ENCODE measurements at regions of chr19 and their contacts with region 1.

Region 1: DNA sequence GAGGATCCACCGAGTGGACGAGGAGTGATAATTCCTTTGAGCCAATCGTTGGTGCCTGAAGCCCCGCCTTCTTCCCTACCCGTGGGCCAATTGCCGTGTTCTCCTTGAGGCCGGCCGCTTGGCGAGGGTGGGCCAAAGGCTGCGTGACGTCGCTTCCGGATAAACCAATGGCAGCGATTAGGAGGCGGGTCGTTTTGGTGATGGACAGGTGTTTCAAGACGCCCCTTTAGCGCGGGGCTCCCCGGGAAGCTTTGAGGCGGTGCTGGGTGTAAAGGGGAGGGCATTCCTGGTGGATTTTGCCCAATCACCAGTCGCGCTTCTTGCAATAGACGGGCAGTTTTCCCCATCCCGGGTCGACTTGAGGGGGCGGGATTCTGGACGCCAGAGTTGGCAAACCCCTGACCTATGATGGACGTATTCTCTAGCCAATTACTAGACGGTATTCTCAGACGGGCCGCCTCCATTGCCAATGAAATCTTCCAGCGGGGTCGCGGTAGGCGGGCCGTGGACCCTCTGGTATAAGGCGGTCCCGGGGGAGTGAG is 310 bp upstream of the PRMT1 start:
- DNase-seq: peak; percentile 93
- ATAC-seq: peak; percentile 67
- H3K4me3 Mint-ChIP-seq: peak overlapping the region; percentile 99
- H3K27ac Mint-ChIP-seq: peak overlapping the region; percentile 99
- H3K4me1 Mint-ChIP-seq: peaks cover 70% of the 10 kb centered on the region
- H3K27me3 Mint-ChIP-seq: no peaks in the 10 kb centered on the region
- CTCF ChIP-seq: no peak

Region 2: DNA sequence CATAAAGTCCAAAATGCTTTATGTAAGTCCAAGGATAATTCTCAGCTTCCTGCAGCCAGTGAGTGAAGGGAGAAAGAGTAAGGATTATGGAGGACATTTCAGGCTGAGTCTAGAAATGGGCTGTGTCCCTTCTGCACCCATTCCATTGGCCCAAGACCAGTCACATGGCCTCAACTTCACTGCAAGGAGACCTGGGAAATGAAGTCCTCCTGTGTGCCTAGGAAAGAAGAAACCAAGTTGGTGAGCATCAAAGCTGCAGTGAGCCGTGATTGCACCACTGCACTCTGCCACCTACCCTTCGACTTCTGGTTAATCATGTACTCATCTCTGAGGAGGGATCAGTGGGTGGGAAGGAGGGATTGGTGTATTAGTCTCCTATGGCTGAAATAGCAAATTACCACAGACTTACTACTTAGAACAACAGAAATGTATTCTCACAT is 345.1 kb before region 1 on chr19:
- CTCF ChIA-PET with region 1: no interaction called
- POLR2A ChIA-PET with region 1: no interaction called
- intact Hi-C with region 1: loop called (anchors 5 kb)
- DNase-seq: no peak
- ATAC-seq: peak; percentile 44
- H3K4me3 Mint-ChIP-seq: peak overlapping the region; percentile 73
- H3K27ac Mint-ChIP-seq: peak overlapping the region; percentile 100
- H3K4me1 Mint-ChIP-seq: peaks cover 95% of the 10 kb centered on the region
- H3K27me3 Mint-ChIP-seq: no peaks in the 10 kb centered on the region
- CTCF ChIP-seq: no peak

Region 3: DNA sequence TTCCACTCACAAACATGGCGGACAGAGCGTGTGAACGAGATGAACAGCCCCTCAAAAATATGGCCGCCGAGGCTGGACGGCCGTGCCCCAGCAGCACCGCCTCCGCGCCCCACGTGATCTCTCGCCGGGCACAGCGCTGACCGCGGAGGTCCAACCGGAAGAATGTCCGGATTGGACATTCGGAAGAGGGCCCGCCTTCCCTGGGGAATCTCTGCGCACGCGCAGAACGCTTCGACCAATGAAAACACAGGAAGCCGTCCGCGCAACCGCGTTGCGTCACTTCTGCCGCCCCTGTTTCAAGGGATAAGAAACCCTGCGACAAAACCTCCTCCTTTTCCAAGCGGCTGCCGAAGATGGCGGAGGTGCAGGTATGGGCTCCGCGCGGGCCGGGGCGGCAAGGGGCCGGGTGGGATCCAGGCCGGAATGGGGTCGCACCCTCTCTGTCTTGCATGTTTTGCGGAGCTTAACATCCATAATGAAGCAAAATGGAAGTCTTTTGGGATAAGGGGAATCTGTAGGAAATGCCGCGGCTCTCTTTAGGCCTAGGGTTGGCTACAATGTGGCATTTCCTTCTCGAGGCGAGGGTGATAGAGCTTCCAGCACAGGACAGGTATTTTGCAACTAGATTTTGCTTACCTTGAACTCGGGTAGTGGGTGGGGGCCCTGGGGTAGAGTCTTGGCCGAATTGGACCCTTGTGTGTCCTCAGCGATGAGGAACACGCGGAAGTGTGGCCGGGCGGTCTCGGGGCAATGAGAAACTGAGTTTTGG is 189.3 kb before region 1 on chr19 and contains the start of gene RPL13A:
- CTCF ChIA-PET with region 1: no interaction called
- POLR2A ChIA-PET with region 1: interaction called, 3 read pairs
- intact Hi-C with region 1: loop called (anchors 1 kb)
- DNase-seq: peak; percentile 100
- ATAC-seq: peak; percentile 91
- H3K4me3 Mint-ChIP-seq: peak within 1 kb of the TSS; percentile 93
- H3K27ac Mint-ChIP-seq: peak within 1 kb of the TSS; percentile 91
- H3K4me1 Mint-ChIP-seq: peaks cover 37% of the 10 kb centered on the region
- H3K27me3 Mint-ChIP-seq: peaks cover 2% of the 10 kb centered on the region
- CTCF ChIP-seq: no peak
- total RNA-seq, gene RPL13A: 6,642 and 7,342 TPM in 2 replicates

Region 4: DNA sequence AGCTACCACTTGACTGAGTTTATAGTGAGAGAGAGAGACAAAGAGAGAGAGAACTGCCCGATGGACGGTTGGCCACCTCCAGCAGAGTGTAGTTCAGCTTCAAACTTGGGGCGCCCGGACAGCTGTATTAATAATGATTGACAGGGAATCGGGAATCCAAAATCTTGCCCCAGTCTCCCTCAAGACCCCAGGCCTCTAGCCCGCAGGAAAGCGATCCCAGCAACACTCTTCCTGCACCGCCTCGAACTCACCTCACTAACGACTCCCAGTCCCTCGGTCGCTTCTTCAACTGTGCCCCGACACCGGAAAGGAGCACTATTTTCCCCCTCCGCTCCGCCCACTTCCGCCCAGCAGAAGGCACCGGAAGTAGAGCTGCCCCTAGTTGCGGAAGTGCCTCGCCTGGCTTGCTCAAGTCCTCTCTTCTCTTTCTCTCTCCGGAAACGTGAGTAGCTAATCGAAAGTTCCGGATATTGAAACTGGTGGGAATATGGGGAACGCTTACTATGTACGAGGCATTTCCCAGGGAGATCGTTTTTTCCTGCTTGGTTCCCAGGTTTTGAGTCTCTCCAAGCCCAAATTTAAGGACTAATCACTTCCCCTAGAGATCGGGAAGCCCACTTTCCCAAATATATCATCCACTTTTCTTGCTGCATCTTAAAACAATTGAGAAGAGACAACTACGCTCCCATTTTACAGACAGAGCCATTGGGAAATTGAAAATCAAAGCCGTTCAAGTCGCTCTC is 96.3 kb before region 1 on chr19 and contains the start of gene NOSIP:
- CTCF ChIA-PET with region 1: interaction called, 3 read pairs
- POLR2A ChIA-PET with region 1: interaction called, 22 read pairs
- intact Hi-C with region 1: no loop called
- DNase-seq: peak; percentile 87
- ATAC-seq: peak; percentile 98
- H3K4me3 Mint-ChIP-seq: peak within 1 kb of the TSS; percentile 92
- H3K27ac Mint-ChIP-seq: peak within 1 kb of the TSS; percentile 84
- H3K4me1 Mint-ChIP-seq: peaks cover 24% of the 10 kb centered on the region
- H3K27me3 Mint-ChIP-seq: no peaks in the 10 kb centered on the region
- CTCF ChIP-seq: no peak
- total RNA-seq, gene NOSIP: 49.9 and 54.8 TPM in 2 replicates

Region 5: GRCh38 chr19:49746206-49747091 is 69.7 kb after region 1 on chr19:
- CTCF ChIA-PET with region 1: no interaction called
- POLR2A ChIA-PET with region 1: interaction called, 12 read pairs
- intact Hi-C with region 1: no loop called
- DNase-seq: peak; percentile 27
- ATAC-seq: peak; percentile 84
- H3K4me3 Mint-ChIP-seq: no peak overlapping the region
- H3K27ac Mint-ChIP-seq: no peak overlapping the region
- H3K4me1 Mint-ChIP-seq: no peaks in the 10 kb centered on the region
- H3K27me3 Mint-ChIP-seq: peaks cover 4% of the 10 kb centered on the region
- CTCF ChIP-seq: no peak

Region 6: DNA sequence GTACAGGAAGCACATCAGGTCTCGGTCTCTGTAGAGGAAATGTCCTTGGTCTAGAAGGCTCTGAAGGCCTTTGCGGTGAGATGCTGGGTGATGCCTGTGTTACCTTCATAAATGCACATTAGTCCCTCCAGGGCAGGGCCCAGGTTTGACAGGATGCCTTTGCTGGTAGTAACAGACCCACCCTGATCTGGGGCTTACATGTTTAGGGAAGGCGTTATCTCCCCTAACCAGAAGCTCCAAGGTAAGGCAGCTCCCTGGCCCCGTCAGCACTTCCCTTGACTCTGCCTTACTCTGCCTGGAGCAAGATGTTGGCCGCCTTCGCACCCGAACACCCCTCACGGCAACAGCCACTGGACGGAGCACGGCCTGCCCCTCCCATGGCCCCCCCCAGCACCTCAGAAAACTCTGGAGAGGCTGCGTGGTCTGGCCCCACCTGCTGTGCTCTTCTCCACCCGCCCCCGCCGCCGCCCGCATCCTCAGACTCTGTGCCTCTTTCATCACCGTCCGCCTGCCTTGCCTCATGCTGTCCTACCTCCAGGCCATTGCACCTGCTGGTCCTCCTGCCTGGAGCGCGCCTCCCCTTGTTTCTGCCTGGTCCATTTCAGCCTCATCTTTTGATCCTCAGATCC is 99.1 kb after region 1 on chr19:
- CTCF ChIA-PET with region 1: no interaction called
- POLR2A ChIA-PET with region 1: no interaction called
- intact Hi-C with region 1: no loop called
- DNase-seq: no peak
- ATAC-seq: no peak
- H3K4me3 Mint-ChIP-seq: no peak overlapping the region
- H3K27ac Mint-ChIP-seq: no peak overlapping the region
- H3K4me1 Mint-ChIP-seq: peaks cover 21% of the 10 kb centered on the region
- H3K27me3 Mint-ChIP-seq: no peaks in the 10 kb centered on the region
- CTCF ChIP-seq: no peak

Region 7: GRCh38 chr19:49929611-49930482 is 253.1 kb after region 1 on chr19:
- CTCF ChIA-PET with region 1: no interaction called
- POLR2A ChIA-PET with region 1: interaction called, 18 read pairs
- intact Hi-C with region 1: loop called (anchors 2 kb)
- DNase-seq: peak; percentile 84
- ATAC-seq: peak; percentile 83
- H3K4me3 Mint-ChIP-seq: peak overlapping the region; percentile 92
- H3K27ac Mint-ChIP-seq: peak overlapping the region; percentile 89
- H3K4me1 Mint-ChIP-seq: peaks cover 48% of the 10 kb centered on the region
- H3K27me3 Mint-ChIP-seq: no peaks in the 10 kb centered on the region
- CTCF ChIP-seq: no peak